ENCODE measurements at regions of chr4 and their contacts with region 1.

Region 1: GRCh38 chr4:174764105-174764729 is 64.8 kb downstream of the GLRA3 start:
- DNase-seq: no peak
- H3K4me3 ChIP-seq: no peak overlapping the region
- H3K27ac ChIP-seq: no peak overlapping the region
- H3K4me1 ChIP-seq: no peaks in the 10 kb centered on the region
- H3K27me3 ChIP-seq: no peaks in the 10 kb centered on the region
- CTCF ChIP-seq: peak in 2 of 4 experiments; percentile 45 to 50
- POLR2A ChIP-seq: no peak

Region 2: GRCh38 chr4:174813292-174813691 is 49.1 kb after region 1 on chr4:
- intact Hi-C with region 1: no loop called
- DNase-seq: no peak
- H3K4me3 ChIP-seq: no peak overlapping the region
- H3K27ac ChIP-seq: no peak overlapping the region
- H3K4me1 ChIP-seq: no peaks in the 10 kb centered on the region
- H3K27me3 ChIP-seq: no peaks in the 10 kb centered on the region
- CTCF ChIP-seq: no peak
- POLR2A ChIP-seq: no peak

Region 3: DNA sequence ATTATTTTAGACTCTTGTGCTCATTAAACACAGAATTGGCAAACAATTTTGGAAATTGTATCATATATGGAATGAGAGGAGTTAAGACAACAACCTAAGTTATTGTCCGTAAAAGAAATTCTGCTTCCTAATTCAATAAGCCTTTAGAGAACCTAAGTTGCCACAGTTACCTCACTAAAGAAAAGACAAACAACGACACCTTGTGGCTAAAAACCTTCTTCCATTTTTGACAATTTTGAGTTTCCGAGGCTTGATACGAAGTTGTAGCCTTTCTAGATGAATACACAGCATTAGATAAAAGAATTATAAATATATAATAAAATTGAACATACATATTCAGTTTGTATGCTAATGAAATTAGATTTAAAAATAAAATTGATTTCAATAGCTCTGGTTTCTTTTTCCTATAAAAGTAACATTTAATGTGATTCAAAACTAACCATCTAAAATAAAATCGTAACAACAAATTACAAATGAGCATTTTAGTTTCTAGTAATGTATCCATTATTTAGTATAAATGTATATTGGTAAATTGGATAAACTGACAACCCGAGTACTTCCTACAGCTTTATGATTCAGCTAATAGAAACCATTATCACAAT is 772.7 kb after region 1 on chr4:
- intact Hi-C with region 1: loop called (anchors 10 kb)
- DNase-seq: no peak
- H3K4me3 ChIP-seq: no peak overlapping the region
- H3K27ac ChIP-seq: no peak overlapping the region
- H3K4me1 ChIP-seq: no peaks in the 10 kb centered on the region
- H3K27me3 ChIP-seq: no peaks in the 10 kb centered on the region
- CTCF ChIP-seq: peak in 3 of 4 experiments; percentile 26 to 30 (median 28)
- POLR2A ChIP-seq: no peak

Measured in prostate gland (tissue), 2 donors.